Activated T-helper 2 cell treated with anti-CD3 and anti-CD28 coated beads, Interferon-gamma antibody, Interleukin-2, Interleukin-4, amounts not matched to agents 10 μg/mL and 5 μg/mL and 100 μg/mL, durations not matched to agents 14 hours and 24 hours and 36 hours (primary cell): ENCODE measurements at regions of chr7 and their contacts with region 1.

Region 1: DNA sequence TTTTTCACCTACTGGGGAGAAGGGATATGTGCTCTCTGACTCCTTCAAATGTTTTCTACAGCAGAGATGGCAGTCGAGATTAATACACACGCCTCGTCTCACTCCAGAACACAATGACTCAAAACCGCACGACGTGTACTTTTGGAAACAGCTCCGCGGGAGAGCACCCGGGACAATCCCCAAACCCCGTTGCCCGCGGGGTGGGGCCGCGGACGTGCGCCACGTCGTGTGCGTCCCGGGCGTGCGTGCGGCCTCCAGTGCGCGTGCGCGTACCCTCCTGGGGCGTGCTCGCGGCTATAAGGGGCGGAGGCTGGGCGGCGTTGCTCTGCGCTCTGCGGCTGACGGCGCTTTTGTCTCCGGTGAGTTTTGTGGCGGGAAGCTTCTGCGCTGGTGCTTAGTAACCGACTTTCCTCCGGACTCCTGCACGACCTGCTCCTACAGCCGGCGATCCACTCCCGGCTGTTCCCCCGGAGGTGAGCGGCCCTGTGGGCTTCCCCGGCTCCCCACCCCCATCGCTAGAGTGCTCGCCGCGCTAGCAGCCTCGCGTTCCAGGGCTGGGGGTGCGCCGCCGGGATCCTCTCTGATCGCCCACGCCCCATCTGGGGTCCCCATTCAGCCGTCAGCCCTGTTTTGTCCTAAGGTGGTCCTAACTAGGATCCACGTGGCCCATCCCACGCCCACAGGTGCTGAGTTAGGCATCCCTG is at the start of gene HILPDA:
- DNase-seq: peak; percentile 95
- H3K4me3 Mint-ChIP-seq: peak within 1 kb of the TSS; percentile 88
- H3K27ac Mint-ChIP-seq: peak within 1 kb of the TSS; percentile 99
- H3K4me1 Mint-ChIP-seq: peaks cover 64% of the 10 kb centered on the region
- H3K27me3 Mint-ChIP-seq: no peaks in the 10 kb centered on the region
- total RNA-seq, gene HILPDA: 406 and 416 TPM in 2 replicates

Region 2: DNA sequence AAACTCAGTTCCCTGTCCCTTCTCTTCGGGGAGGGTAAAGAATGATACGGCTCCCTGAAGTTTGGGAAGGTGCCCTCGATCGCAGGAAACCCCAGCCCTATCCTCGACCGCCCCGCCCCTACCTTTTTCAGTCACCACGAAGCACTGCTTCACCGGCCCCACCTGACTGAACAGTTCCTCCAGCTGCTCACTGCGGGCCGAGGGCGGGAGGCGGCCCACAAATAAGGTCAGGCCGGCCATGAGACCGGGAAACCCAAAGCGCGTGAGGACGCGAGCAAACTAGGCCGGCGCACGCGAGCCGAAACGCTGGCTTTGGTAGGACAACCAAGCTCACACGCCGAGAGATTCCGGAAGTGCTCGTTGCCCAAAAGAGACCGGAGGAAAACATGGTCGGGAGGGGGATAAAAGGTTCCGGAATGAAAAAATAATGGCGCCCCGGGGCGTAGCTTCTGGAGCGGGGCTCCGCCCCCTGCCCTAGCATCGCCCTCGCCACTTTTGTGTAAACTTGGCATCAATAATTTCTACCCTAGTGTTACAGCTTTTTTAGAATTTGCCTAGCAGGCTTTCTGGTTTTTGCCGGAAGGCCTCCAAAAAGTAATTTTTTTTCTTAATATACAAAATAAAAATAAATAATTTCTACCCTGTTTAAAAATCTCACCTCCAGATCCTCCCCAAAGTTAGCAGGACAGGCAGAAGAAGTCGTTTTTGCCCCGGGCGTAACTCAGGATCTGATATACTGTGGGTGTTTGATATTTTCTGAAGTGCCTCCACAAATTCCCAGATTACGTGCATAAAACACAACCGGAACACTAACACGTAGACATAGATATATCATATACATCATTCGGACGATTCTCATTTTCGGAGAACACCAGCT is 111.9 kb before region 1 on chr7 and contains the start of gene RBM28:
- intact Hi-C with region 1: loop called (anchors 5 kb)
- DNase-seq: peak; percentile 84
- H3K4me3 Mint-ChIP-seq: peak within 1 kb of the TSS; percentile 92
- H3K27ac Mint-ChIP-seq: peak within 1 kb of the TSS; percentile 83
- H3K4me1 Mint-ChIP-seq: peaks cover 20% of the 10 kb centered on the region
- H3K27me3 Mint-ChIP-seq: peaks cover 12% of the 10 kb centered on the region
- total RNA-seq, gene RBM28: 66.7 and 67.7 TPM in 2 replicates

Region 3: GRCh38 chr7:128409596-128410160 is 46.0 kb before region 1 on chr7 and contains the start of gene IMPDH1:
- intact Hi-C with region 1: loop called (anchors 1 kb)
- DNase-seq: peak; percentile 80
- H3K4me3 Mint-ChIP-seq: peak within 1 kb of the TSS; percentile 89
- H3K27ac Mint-ChIP-seq: peak within 1 kb of the TSS; percentile 81
- H3K4me1 Mint-ChIP-seq: peaks cover 29% of the 10 kb centered on the region
- H3K27me3 Mint-ChIP-seq: peaks cover 14% of the 10 kb centered on the region
- total RNA-seq, gene IMPDH1: 108 and 112 TPM in 2 replicates

Region 4: GRCh38 chr7:128497405-128497804 is 41.7 kb after region 1 on chr7:
- intact Hi-C with region 1: no loop called
- DNase-seq: no peak
- H3K4me3 Mint-ChIP-seq: no peak overlapping the region
- H3K27ac Mint-ChIP-seq: no peak overlapping the region
- H3K4me1 Mint-ChIP-seq: no peaks in the 10 kb centered on the region
- H3K27me3 Mint-ChIP-seq: no peaks in the 10 kb centered on the region

Region 5: GRCh38 chr7:128530855-128531104 is 75.1 kb after region 1 on chr7:
- intact Hi-C with region 1: loop called (anchors 5 kb)
- DNase-seq: no peak
- H3K4me3 Mint-ChIP-seq: no peak overlapping the region
- H3K27ac Mint-ChIP-seq: no peak overlapping the region
- H3K4me1 Mint-ChIP-seq: peaks cover 24% of the 10 kb centered on the region
- H3K27me3 Mint-ChIP-seq: no peaks in the 10 kb centered on the region